Activated B cell treated with CpG ODN at 0.5 μM for 24 hours (primary cell): ENCODE measurements at regions of chr22 and their contacts with region 1.

Region 1: GRCh38 chr22:41468381-41469217 is at the starts of genes ACO2 and PHF5A:
- DNase-seq: peak; percentile 98
- ATAC-seq: peak; percentile 90
- H3K4me3 Mint-ChIP-seq: peak within 1 kb of the TSS; percentile 88
- H3K27ac Mint-ChIP-seq: peak within 1 kb of the TSS; percentile 99
- H3K4me1 Mint-ChIP-seq: peaks cover 53% of the 10 kb centered on the region
- H3K27me3 Mint-ChIP-seq: no peaks in the 10 kb centered on the region
- CTCF ChIP-seq: no peak
- total RNA-seq, gene ACO2: 152 and 153 TPM in 2 replicates
- total RNA-seq, gene PHF5A: 47.4 and 54.0 TPM in 2 replicates

Region 2: DNA sequence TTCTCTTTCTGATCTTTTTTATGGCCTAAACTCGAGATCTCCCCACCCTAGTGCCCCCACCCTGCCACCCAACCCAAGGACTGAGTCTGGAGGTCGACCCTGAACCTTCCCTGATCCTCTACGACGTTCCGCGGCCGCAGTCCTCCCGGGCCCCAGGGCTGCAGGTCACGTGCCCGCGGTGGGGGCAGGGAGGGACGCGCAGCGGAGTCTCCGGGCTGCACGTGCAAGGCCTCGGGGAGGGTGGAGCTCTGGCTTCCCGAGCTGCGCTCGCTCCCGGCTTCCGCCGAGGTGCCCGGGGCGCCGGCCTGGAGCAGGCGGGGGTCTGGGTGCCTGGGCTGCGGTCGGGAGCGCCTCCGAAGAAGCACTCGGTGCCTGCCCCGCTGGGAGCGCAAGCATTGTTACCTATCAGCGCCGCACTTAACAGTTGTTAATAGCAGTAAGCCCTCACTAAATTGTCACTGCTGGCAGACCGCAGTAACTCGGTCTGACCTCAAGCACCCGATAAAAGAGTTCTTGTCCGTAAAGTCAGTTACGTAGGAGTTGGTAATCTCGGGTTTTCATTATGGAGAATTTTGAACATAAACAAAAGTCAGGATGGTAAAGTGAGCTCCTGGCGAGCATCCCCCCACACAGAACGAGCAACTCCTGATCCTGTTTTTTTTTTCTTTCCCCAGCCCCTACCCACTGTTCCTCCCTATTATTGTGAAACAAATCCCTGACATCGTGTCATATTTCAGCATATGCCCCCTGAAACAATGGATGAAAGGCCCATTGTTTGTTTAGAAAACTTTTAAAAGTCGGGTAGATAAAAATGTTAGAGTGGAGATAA is 445.9 kb before region 1 on chr22:
- CTCF ChIA-PET with region 1: no interaction called
- POLR2A ChIA-PET with region 1: interaction called, 11 read pairs
- intact Hi-C with region 1: no loop called
- DNase-seq: peak; percentile 87
- ATAC-seq: peak; percentile 75
- H3K4me3 Mint-ChIP-seq: peak overlapping the region; percentile 85
- H3K27ac Mint-ChIP-seq: peak overlapping the region; percentile 87
- H3K4me1 Mint-ChIP-seq: peaks cover 19% of the 10 kb centered on the region
- H3K27me3 Mint-ChIP-seq: no peaks in the 10 kb centered on the region
- CTCF ChIP-seq: no peak

Region 3: GRCh38 chr22:41237707-41238569 is 230.7 kb before region 1 on chr22:
- CTCF ChIA-PET with region 1: no interaction called
- POLR2A ChIA-PET with region 1: no interaction called
- intact Hi-C with region 1: no loop called
- DNase-seq: peak; percentile 78
- ATAC-seq: peak; percentile 97
- H3K4me3 Mint-ChIP-seq: peak overlapping the region; percentile 64
- H3K27ac Mint-ChIP-seq: no peak overlapping the region
- H3K4me1 Mint-ChIP-seq: peaks cover 8% of the 10 kb centered on the region
- H3K27me3 Mint-ChIP-seq: no peaks in the 10 kb centered on the region
- CTCF ChIP-seq: no peak

Region 4: DNA sequence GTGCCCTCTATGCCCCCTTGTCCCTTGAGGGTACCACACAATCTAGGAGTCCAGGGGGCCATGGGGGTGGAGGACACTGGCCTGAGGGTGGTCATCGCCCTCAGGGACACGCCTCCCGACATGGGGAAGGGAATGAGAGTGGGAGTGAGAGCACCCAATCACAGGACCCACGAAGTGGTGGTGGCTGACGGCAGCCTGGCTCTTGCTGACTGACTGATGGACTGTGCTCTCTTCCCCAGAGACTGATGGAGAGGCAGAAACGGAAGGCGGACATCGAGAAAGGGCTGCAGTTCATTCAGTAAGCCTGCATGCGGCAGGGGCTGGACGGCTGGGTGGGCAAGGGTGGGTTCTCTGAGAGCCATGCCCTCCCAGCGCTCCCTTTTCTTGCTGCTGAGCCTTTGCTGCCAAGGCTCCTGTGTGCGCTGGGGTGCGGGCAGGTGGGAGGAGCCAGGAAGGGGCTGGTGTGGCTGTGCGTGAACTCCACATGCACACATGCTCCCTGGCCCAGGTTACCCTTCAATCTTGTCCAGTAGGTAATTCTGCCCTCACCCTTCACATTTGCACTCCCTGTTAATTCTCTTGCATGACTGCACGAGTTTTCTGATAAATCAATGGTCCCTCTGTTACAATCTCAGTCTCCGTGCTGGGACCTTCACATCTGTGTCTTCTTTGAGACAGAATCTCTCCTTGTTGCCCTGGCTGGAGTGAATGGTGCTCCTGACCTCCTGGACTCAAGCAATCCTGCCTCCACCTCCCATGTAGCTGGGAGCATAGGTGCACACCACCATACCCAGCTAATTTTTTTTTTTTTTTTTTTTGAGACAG is 148.0 kb before region 1 on chr22:
- CTCF ChIA-PET with region 1: no interaction called
- POLR2A ChIA-PET with region 1: no interaction called
- intact Hi-C with region 1: no loop called
- DNase-seq: no peak
- ATAC-seq: no peak
- H3K4me3 Mint-ChIP-seq: no peak overlapping the region
- H3K27ac Mint-ChIP-seq: no peak overlapping the region
- H3K4me1 Mint-ChIP-seq: peaks cover 5% of the 10 kb centered on the region
- H3K27me3 Mint-ChIP-seq: no peaks in the 10 kb centered on the region
- CTCF ChIP-seq: no peak

Region 5: GRCh38 chr22:41381329-41382097 is 87.1 kb before region 1 on chr22 and contains the start of gene TEF:
- CTCF ChIA-PET with region 1: no interaction called
- POLR2A ChIA-PET with region 1: interaction called, 14 read pairs
- intact Hi-C with region 1: loop called (anchors 1 kb)
- DNase-seq: peak; percentile 95
- ATAC-seq: peak; percentile 84
- H3K4me3 Mint-ChIP-seq: peak within 1 kb of the TSS; percentile 91
- H3K27ac Mint-ChIP-seq: peak within 1 kb of the TSS; percentile 98
- H3K4me1 Mint-ChIP-seq: peaks cover 24% of the 10 kb centered on the region
- H3K27me3 Mint-ChIP-seq: no peaks in the 10 kb centered on the region
- CTCF ChIP-seq: no peak
- total RNA-seq, gene TEF: 5.1 and 5.2 TPM in 2 replicates

Region 6: GRCh38 chr22:41425660-41426365 is 42.8 kb before region 1 on chr22:
- CTCF ChIA-PET with region 1: no interaction called
- POLR2A ChIA-PET with region 1: interaction called, 15 read pairs
- intact Hi-C with region 1: no loop called
- DNase-seq: no peak
- ATAC-seq: peak; percentile 63
- H3K4me3 Mint-ChIP-seq: peak overlapping the region; percentile 25
- H3K27ac Mint-ChIP-seq: peak overlapping the region; percentile 73
- H3K4me1 Mint-ChIP-seq: peaks cover 46% of the 10 kb centered on the region
- H3K27me3 Mint-ChIP-seq: no peaks in the 10 kb centered on the region
- CTCF ChIP-seq: no peak

Region 7: DNA sequence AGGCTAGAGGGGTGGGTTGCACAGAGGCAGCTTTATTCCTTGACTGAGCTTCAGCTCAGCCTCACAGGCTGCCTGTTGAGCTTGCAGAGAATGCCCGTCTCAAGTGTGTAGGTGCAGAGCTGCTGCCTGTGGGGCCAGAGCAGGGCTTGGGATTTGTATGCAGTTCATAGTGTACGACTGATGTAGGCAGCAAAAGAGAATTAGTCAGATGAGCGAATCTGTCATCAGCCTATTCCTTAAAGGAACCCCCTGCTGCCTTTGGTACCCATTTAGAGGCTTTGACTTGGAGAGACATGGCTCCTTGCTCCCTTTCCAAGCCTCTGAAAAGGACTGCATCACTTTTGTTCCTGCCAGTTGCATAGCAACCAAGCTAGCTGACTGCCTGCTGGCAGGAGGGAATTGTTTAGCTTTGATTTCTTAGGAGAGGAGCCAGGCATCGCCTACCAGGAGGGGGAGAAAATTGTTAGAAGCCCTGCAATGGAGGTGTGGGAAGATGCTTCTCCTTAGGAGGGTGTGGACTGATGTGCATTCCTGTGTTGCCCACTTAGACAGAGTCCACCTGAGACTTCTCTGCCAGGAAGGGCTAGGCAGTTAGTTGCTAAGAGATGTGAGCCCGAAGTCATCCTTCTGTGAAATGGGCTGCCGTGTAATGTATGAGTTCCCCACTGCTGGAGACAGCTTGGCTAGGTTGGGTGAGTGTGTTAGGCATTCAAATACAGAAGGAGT is 11.2 kb after region 1 on chr22:
- CTCF ChIA-PET with region 1: interaction called, 11 read pairs
- POLR2A ChIA-PET with region 1: interaction called, 155 read pairs
- intact Hi-C with region 1: loop called (anchors 1 kb)
- DNase-seq: no peak
- ATAC-seq: no peak
- H3K4me3 Mint-ChIP-seq: peak overlapping the region; percentile 79
- H3K27ac Mint-ChIP-seq: peak overlapping the region; percentile 96
- H3K4me1 Mint-ChIP-seq: peaks cover 87% of the 10 kb centered on the region
- H3K27me3 Mint-ChIP-seq: no peaks in the 10 kb centered on the region
- CTCF ChIP-seq: no peak

Region 8: GRCh38 chr22:41526837-41527799 is 58.5 kb after region 1 on chr22:
- CTCF ChIA-PET with region 1: interaction called, 5 read pairs
- POLR2A ChIA-PET with region 1: interaction called, 7 read pairs
- intact Hi-C with region 1: loop called (anchors 2 kb)
- DNase-seq: peak; percentile 67
- ATAC-seq: peak; percentile 73
- H3K4me3 Mint-ChIP-seq: no peak overlapping the region
- H3K27ac Mint-ChIP-seq: peak overlapping the region; percentile 25
- H3K4me1 Mint-ChIP-seq: peaks cover 19% of the 10 kb centered on the region
- H3K27me3 Mint-ChIP-seq: no peaks in the 10 kb centered on the region
- CTCF ChIP-seq: no peak

Region 9: GRCh38 chr22:41551877-41552582 is 83.4 kb after region 1 on chr22:
- CTCF ChIA-PET with region 1: no interaction called
- POLR2A ChIA-PET with region 1: no interaction called
- intact Hi-C with region 1: no loop called
- DNase-seq: no peak
- ATAC-seq: no peak
- H3K4me3 Mint-ChIP-seq: no peak overlapping the region
- H3K27ac Mint-ChIP-seq: no peak overlapping the region
- H3K4me1 Mint-ChIP-seq: no peaks in the 10 kb centered on the region
- H3K27me3 Mint-ChIP-seq: peaks cover 8% of the 10 kb centered on the region
- CTCF ChIP-seq: no peak

Region 10: GRCh38 chr22:41589391-41590241 is 121.0 kb after region 1 on chr22 and contains the start of gene PMM1:
- CTCF ChIA-PET with region 1: no interaction called
- POLR2A ChIA-PET with region 1: interaction called, 11 read pairs
- intact Hi-C with region 1: no loop called
- DNase-seq: peak; percentile 98
- ATAC-seq: peak; percentile 98
- H3K4me3 Mint-ChIP-seq: peak within 1 kb of the TSS; percentile 91
- H3K27ac Mint-ChIP-seq: peak within 1 kb of the TSS; percentile 88
- H3K4me1 Mint-ChIP-seq: peaks cover 12% of the 10 kb centered on the region
- H3K27me3 Mint-ChIP-seq: no peaks in the 10 kb centered on the region
- CTCF ChIP-seq: no peak
- total RNA-seq, gene PMM1: 13.0 and 15.1 TPM in 2 replicates